IMR-90 (cell line): ENCODE measurements at regions of chr17 and their contacts with region 1.

Region 1: DNA sequence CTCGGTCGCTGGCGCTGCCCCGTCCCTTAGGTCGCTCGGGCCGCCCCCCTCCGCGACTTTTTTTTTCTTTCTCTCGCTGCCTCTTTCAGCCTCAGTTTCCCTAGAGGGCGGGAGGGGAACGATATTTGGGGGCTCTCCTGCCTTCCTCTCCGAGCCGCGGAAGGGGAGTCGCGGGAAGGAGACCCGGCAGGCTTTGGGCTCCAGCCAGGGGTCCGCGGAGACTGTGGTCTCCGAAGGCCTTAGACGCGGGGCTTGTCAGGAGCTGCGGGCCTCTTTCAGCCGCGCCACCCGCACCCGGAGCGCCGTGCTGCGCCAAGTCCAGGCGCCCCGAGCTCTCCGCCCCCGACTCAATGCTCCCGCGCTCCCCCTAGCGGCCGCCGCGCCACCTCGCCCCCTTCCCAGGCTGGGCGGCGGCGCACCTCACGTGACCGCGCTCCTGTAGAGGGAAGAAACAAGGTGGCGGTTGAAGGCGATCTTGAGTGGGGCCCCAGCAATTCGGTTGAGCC is at the start of gene LRRC37B:
- DNase-seq: peak; percentile 57
- ATAC-seq: peak; percentile 97
- H3K4me3 ChIP-seq: peak within 1 kb of the TSS; percentile 71
- H3K27ac ChIP-seq: peak within 1 kb of the TSS; percentile 22
- H3K4me1 ChIP-seq: no peaks in the 10 kb centered on the region
- H3K27me3 ChIP-seq: no peaks in the 10 kb centered on the region
- CTCF ChIP-seq: peak; percentile 90
- POLR2A ChIP-seq: no peak
- RAD21 ChIP-seq: peak; percentile 46
- total RNA-seq, gene LRRC37B: 4.3 and 4.7 TPM in 2 replicates

Region 2: DNA sequence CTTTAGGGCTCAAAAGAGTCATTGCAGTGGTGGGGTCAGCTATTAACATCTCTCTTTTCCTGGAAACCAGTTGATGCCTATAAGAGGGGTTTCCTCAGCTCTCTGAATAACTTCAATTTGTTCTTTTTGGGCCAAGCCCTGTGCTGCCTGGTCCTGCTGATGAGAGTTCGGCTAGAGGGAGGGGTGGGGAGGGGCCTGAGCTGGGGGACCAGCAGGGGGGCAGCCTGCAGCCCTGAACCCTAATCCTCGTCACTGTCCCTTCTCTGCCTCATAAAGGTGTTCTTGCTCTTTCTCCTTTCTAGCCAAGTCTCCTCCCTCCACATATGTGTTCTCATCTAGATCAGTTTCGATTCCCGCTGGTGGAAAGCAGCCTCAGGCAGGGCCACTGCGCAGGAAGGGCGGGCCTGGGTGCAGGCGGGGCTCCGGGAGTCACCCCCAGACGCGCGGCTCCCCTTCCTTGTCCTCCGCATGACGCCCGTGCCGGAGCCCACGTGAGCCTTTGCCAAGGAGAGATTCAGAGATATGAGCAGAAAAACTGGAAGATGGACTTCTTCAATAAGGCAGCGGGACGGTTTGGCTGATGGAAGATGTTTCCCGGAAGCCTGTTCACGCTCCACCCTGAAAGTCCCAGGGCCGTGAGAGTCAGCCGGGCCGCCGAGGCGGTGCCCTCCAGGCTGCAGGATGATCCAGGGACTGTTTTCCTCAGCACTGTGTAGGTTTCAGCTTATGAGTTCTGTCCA is 120.3 kb after region 1 on chr17:
- CTCF ChIA-PET with region 1: no interaction called
- POLR2A ChIA-PET with region 1: interaction called, 4 read pairs
- dilution Hi-C with region 1: no loop called
- in situ Hi-C with region 1: loop called (anchors 5 kb)
- intact Hi-C with region 1: no loop called
- DNase-seq: peak; percentile 54
- ATAC-seq: peak; percentile 98
- H3K4me3 ChIP-seq: peak overlapping the region; percentile 56
- H3K27ac ChIP-seq: peak overlapping the region; percentile 59
- H3K4me1 ChIP-seq: 0 out of 2 replicates have a peak, but pooled peaks cover 2% of the 10 kb centered on the region
- H3K27me3 ChIP-seq: no peaks in the 10 kb centered on the region
- CTCF ChIP-seq: no peak
- POLR2A ChIP-seq: no peak; the same call in 1 of the 2 replicates
- RAD21 ChIP-seq: no peak

Region 3: DNA sequence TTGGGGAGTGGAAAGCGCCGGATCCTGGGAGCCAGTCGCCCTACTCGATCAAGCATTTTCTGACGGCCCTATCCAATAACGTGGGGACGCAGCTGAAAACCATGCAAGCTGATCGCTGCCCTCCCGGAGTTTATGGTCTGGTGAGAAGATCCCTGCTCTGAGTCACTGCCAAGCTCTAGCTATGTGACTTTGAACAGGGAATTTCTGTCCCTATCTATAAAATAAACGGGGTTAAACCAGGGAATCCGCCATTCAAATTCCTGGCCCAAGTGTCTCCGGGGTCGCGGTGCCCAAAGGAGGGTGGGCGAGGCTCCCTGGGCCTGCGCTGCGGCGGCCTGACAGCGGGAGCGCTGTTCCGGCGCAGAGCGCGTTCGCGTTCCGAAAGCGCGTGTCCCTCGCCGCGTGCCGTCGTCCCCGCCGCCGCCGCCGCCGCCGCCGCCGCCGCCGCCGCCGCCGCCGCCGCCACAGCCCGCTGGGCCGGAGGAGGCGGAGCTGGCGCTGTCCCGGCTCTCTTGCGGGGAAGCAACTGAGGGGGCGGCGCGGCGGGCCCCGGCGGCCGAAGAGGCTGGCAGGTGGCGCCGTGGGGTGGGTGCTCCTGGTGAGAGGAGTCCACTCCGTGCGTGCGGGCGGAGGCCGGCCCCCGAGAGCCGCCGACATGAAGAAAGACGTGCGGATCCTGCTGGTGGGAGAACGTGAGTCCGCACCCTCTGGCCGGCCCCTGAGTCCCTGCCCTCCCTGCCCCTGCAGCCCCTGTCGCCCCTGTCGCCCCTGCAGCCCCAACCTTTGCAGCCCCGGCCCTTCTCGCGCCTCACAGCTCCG is 135.2 kb after region 1 on chr17 and contains the start of gene RHOT1:
- CTCF ChIA-PET with region 1: no interaction called
- POLR2A ChIA-PET with region 1: no interaction called
- dilution Hi-C with region 1: no loop called
- in situ Hi-C with region 1: no loop called
- intact Hi-C with region 1: loop called (anchors 1 kb)
- DNase-seq: peak; percentile 90
- ATAC-seq: peak; percentile 82
- H3K4me3 ChIP-seq: peak within 1 kb of the TSS; percentile 97
- H3K27ac ChIP-seq: peak within 1 kb of the TSS; percentile 87
- H3K4me1 ChIP-seq: no peaks in the 10 kb centered on the region
- H3K27me3 ChIP-seq: no peaks in the 10 kb centered on the region
- CTCF ChIP-seq: peak; percentile 56
- POLR2A ChIP-seq: no peak
- RAD21 ChIP-seq: no peak
- total RNA-seq, gene RHOT1: 27.4 and 40.5 TPM in 2 replicates

Region 4: GRCh38 chr17:32319548-32319905 is 312.5 kb after region 1 on chr17:
- CTCF ChIA-PET with region 1: no interaction called
- POLR2A ChIA-PET with region 1: no interaction called
- dilution Hi-C with region 1: no loop called
- in situ Hi-C with region 1: no loop called
- intact Hi-C with region 1: loop called (anchors 5 kb)
- DNase-seq: peak; percentile 41
- ATAC-seq: peak; percentile 99
- H3K4me3 ChIP-seq: no peak overlapping the region
- H3K27ac ChIP-seq: no peak overlapping the region
- H3K4me1 ChIP-seq: no peaks in the 10 kb centered on the region
- H3K27me3 ChIP-seq: peaks cover 19% of the 10 kb centered on the region
- CTCF ChIP-seq: peak; percentile 96
- POLR2A ChIP-seq: no peak
- RAD21 ChIP-seq: peak; percentile 91